ENCODE measurements at regions of chr1 and their contacts with region 1.

Region 1: GRCh38 chr1:71080739-71081696 is at the start of gene ZRANB2:
- DNase-seq: peak; percentile 98
- ATAC-seq: peak; percentile 99
- H3K4me3 ChIP-seq: peak within 1 kb of the TSS; percentile 93 to 99 (median 97)
- H3K27ac ChIP-seq: peak within 1 kb of the TSS; percentile 98
- H3K4me1 ChIP-seq: peaks cover 28% of the 10 kb centered on the region
- H3K27me3 ChIP-seq: peaks cover 0 to 4% of the 10 kb centered on the region in 2 experiments; a peak in 1 of 5 replicates
- CTCF ChIP-seq: peak; percentile 75
- EP300 ChIP-seq: no peak
- POLR2A ChIP-seq: peak; percentile 72 to 91
- RAD21 ChIP-seq: no peak
- total RNA-seq, gene ZRANB2: 42.8 and 43.0 TPM in 2 replicates

Region 2: DNA sequence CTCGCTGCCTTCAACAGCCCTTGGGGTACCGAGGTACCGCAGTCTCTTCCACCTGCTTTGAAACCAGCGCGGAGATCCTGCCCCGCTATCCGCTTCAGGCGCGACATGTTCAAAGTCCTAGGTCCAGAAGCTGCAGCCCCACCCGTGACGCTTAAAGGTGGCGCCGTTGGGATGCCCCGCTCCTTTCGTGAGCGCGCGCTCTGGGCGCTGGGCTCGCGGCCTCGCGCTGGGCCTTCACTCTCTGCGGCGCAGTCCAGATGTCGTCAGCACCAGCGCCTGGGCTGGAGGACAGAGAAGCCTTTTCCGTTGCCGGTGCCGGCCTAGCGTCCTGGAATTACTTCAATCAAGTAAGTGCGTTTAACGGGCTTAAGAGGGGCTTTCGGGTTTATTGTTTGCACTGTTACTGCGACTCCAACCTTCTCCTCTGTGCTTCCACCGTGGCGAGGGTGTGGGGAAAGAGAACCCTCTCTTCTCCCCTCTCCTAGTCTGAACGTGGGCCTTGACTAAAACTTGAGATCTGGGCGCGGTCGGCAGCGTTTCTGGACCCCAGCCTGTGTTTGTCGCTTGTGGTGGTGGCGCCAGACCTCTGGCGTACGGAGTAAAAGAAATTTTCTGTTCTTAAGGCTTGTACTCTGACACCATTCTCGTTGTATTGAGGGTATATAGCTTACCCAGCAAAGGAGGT is 875.4 kb before region 1 on chr1 and contains the start of gene LRRC40:
- CTCF ChIA-PET with region 1: no interaction called
- POLR2A ChIA-PET with region 1: interaction called, 3 read pairs
- in situ Hi-C with region 1: loop called (anchors 10 kb)
- intact Hi-C with region 1: loop called (anchors 5 kb)
- DNase-seq: peak; percentile 94
- ATAC-seq: peak; percentile 94
- H3K4me3 ChIP-seq: peak within 1 kb of the TSS; percentile 81 to 98 (median 90)
- H3K27ac ChIP-seq: peak within 1 kb of the TSS; percentile 96
- H3K4me1 ChIP-seq: peaks cover 58% of the 10 kb centered on the region
- H3K27me3 ChIP-seq: no peaks in the 10 kb centered on the region; a peak in 2 of 5 replicates
- CTCF ChIP-seq: no peak
- EP300 ChIP-seq: peak in 1 of 2 experiments; percentile 37; a peak in 2 of 4 replicates
- POLR2A ChIP-seq: peak; percentile 88 to 95
- RAD21 ChIP-seq: peak; percentile 11; the same call in 1 of the 2 replicates
- total RNA-seq, gene LRRC40: 32.7 and 54.1 TPM in 2 replicates

Region 3: GRCh38 chr1:70790237-70790923 is 290.6 kb before region 1 on chr1:
- CTCF ChIA-PET with region 1: no interaction called
- POLR2A ChIA-PET with region 1: no interaction called
- in situ Hi-C with region 1: no loop called
- intact Hi-C with region 1: no loop called
- DNase-seq: no peak
- ATAC-seq: no peak
- H3K4me3 ChIP-seq: no peak overlapping the region
- H3K27ac ChIP-seq: no peak overlapping the region
- H3K4me1 ChIP-seq: no peaks in the 10 kb centered on the region
- H3K27me3 ChIP-seq: no peaks in the 10 kb centered on the region
- CTCF ChIP-seq: no peak
- EP300 ChIP-seq: no peak
- POLR2A ChIP-seq: no peak
- RAD21 ChIP-seq: no peak

Region 4: GRCh38 chr1:71106658-71107322 is 25.8 kb after region 1 on chr1:
- CTCF ChIA-PET with region 1: no interaction called
- POLR2A ChIA-PET with region 1: no interaction called
- in situ Hi-C with region 1: no loop called
- intact Hi-C with region 1: no loop called
- DNase-seq: no peak
- ATAC-seq: no peak
- H3K4me3 ChIP-seq: no peak overlapping the region
- H3K27ac ChIP-seq: no peak overlapping the region
- H3K4me1 ChIP-seq: no peaks in the 10 kb centered on the region
- H3K27me3 ChIP-seq: no peaks in the 10 kb centered on the region
- CTCF ChIP-seq: no peak
- EP300 ChIP-seq: no peak
- POLR2A ChIP-seq: no peak
- RAD21 ChIP-seq: no peak

Region 5: GRCh38 chr1:72037745-72038343 is 956.8 kb after region 1 on chr1:
- CTCF ChIA-PET with region 1: no interaction called
- POLR2A ChIA-PET with region 1: no interaction called
- in situ Hi-C with region 1: loop called (anchors 25 kb)
- intact Hi-C with region 1: no loop called
- DNase-seq: peak; percentile 25
- ATAC-seq: peak; percentile 44; the same call in 1 of the 3 replicates
- H3K4me3 ChIP-seq: no peak overlapping the region
- H3K27ac ChIP-seq: no peak overlapping the region
- H3K4me1 ChIP-seq: no peaks in the 10 kb centered on the region
- H3K27me3 ChIP-seq: no peaks in the 10 kb centered on the region
- CTCF ChIP-seq: peak; percentile 51
- EP300 ChIP-seq: no peak
- POLR2A ChIP-seq: no peak
- RAD21 ChIP-seq: no peak

Region 6: GRCh38 chr1:72485801-72486200 is 1404.8 kb after region 1 on chr1:
- CTCF ChIA-PET with region 1: no interaction called
- POLR2A ChIA-PET with region 1: no interaction called
- in situ Hi-C with region 1: no loop called
- intact Hi-C with region 1: loop called (anchors 10 kb)
- DNase-seq: no peak
- ATAC-seq: no peak
- H3K4me3 ChIP-seq: no peak overlapping the region
- H3K27ac ChIP-seq: no peak overlapping the region
- H3K4me1 ChIP-seq: peaks cover 63% of the 10 kb centered on the region
- H3K27me3 ChIP-seq: no peaks in the 10 kb centered on the region
- CTCF ChIP-seq: no peak
- EP300 ChIP-seq: no peak
- POLR2A ChIP-seq: no peak
- RAD21 ChIP-seq: no peak